PC-3 (cell line): ENCODE measurements at regions of chr5 and their contacts with region 1.

Region 1: DNA sequence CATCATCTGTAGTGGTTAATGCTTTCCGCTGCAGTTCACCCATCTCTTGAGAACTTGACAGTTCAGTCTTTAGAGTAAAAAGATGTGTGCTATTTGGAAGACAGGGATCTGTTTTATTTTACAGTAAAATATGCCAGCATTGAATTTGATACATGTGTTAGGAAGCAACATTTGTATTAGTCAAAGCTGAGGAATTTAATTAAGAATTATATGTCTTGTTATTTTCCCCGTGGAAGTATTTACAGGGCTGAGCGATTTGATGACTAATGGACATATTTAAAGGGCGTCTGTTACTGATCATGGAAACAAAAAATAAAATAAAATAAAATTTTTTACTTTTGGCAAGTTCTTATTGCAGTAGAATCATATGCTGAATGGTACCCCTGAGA is 101.3 kb downstream of the PAM start:
- DNase-seq: peak; percentile 88
- ATAC-seq: peak; percentile 63
- H3K4me3 ChIP-seq: peak overlapping the region; percentile 9; the same call in 1 of the 2 replicates
- H3K27ac ChIP-seq: peak overlapping the region; percentile 77
- H3K4me1 ChIP-seq: peaks cover 67% of the 10 kb centered on the region
- H3K27me3 ChIP-seq: no peaks in the 10 kb centered on the region
- CTCF ChIP-seq: no peak

Region 2: GRCh38 chr5:102700120-102700831 is 156.1 kb before region 1 on chr5:
- CTCF ChIA-PET with region 1: no interaction called
- POLR2A ChIA-PET with region 1: no interaction called
- intact Hi-C with region 1: no loop called
- DNase-seq: no peak
- ATAC-seq: no peak; the same call in 1 of the 2 replicates
- H3K4me3 ChIP-seq: no peak overlapping the region
- H3K27ac ChIP-seq: no peak overlapping the region
- H3K4me1 ChIP-seq: no peaks in the 10 kb centered on the region
- H3K27me3 ChIP-seq: no peaks in the 10 kb centered on the region
- CTCF ChIP-seq: no peak

Region 3: GRCh38 chr5:102778478-102778877 is 77.9 kb before region 1 on chr5:
- CTCF ChIA-PET with region 1: no interaction called
- POLR2A ChIA-PET with region 1: no interaction called
- intact Hi-C with region 1: loop called (anchors 2 kb)
- DNase-seq: peak; percentile 64
- ATAC-seq: peak; percentile 53
- H3K4me3 ChIP-seq: no peak overlapping the region
- H3K27ac ChIP-seq: peak overlapping the region; percentile 3; the same call in 1 of the 2 replicates
- H3K4me1 ChIP-seq: peaks cover 27% of the 10 kb centered on the region
- H3K27me3 ChIP-seq: no peaks in the 10 kb centered on the region
- CTCF ChIP-seq: no peak

Region 4: GRCh38 chr5:102811972-102812371 is 44.4 kb before region 1 on chr5:
- CTCF ChIA-PET with region 1: no interaction called
- POLR2A ChIA-PET with region 1: no interaction called
- intact Hi-C with region 1: loop called (anchors 1 kb)
- DNase-seq: peak; percentile 96
- ATAC-seq: peak; percentile 94
- H3K4me3 ChIP-seq: no peak overlapping the region
- H3K27ac ChIP-seq: peak overlapping the region; percentile 8; the same call in 1 of the 2 replicates
- H3K4me1 ChIP-seq: peaks cover 13% of the 10 kb centered on the region
- H3K27me3 ChIP-seq: no peaks in the 10 kb centered on the region
- CTCF ChIP-seq: no peak

Region 5: DNA sequence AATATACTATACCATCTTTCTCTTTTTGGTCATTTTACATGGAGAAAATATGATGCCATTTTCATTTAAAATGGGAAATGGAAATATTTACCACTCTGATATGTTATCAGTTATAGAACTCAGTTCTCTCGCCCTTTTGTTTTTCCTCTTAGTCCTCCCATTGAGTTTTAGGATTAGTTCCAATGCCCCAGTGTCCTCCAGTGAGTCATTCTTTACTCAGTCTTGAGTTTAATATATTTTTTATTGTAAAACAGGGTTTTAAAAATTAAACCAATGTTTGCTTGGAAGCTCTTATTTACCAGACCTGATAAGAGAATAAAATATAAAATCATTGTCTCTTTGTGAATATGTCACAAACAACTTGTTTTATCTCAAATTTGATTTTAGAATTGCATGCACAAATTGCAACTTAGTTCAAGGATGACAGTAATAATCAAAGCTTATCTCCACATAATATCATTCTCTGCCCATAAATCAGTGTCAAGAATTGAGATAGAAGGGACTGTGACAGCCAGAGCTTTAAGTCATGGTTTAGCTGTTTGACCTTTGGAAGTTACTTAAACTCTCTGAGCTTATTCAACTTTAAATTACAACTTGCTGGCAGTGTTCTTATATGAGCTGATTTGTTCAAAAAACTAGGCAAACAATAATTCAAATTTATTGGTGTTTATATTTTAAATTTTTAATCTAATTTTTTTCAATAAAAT is 65.1 kb after region 1 on chr5:
- CTCF ChIA-PET with region 1: no interaction called
- POLR2A ChIA-PET with region 1: no interaction called
- intact Hi-C with region 1: loop called (anchors 2 kb)
- DNase-seq: peak; percentile 70
- ATAC-seq: peak; percentile 79
- H3K4me3 ChIP-seq: no peak overlapping the region
- H3K27ac ChIP-seq: peak overlapping the region; percentile 83
- H3K4me1 ChIP-seq: peaks cover 36% of the 10 kb centered on the region
- H3K27me3 ChIP-seq: no peaks in the 10 kb centered on the region
- CTCF ChIP-seq: no peak

Region 6: GRCh38 chr5:103132684-103133083 is 276.3 kb after region 1 on chr5:
- CTCF ChIA-PET with region 1: no interaction called
- POLR2A ChIA-PET with region 1: no interaction called
- intact Hi-C with region 1: no loop called
- DNase-seq: no peak
- ATAC-seq: no peak
- H3K4me3 ChIP-seq: no peak overlapping the region
- H3K27ac ChIP-seq: no peak overlapping the region
- H3K4me1 ChIP-seq: no peaks in the 10 kb centered on the region
- H3K27me3 ChIP-seq: no peaks in the 10 kb centered on the region
- CTCF ChIP-seq: no peak

Region 7: DNA sequence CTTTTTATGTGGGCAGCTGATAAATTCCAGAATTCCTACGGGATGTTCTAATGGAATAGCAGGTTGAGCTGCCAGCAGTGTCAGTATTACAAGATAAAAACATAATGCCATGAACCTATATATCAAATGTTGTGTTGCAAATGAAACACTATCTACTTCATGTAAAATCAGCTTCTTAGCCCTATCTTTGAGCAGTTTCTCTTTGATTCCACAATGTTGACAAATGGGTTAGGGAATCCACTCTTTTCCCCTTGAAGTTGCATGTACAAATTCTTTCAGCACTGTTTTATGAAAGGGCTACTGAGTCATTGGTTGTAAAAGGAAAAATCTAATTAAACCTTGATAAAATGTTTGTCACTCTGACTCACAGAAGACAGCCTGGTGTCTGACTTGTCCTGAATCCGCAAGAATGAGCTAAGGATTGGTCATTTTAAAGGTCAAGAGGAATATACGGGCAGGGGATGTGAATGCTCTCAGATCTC is 1656.8 kb after region 1 on chr5:
- CTCF ChIA-PET with region 1: no interaction called
- POLR2A ChIA-PET with region 1: no interaction called
- intact Hi-C with region 1: loop called (anchors 5 kb)
- DNase-seq: peak; percentile 97
- ATAC-seq: peak; percentile 94
- H3K4me3 ChIP-seq: peak overlapping the region; percentile 15; the same call in 1 of the 2 replicates
- H3K27ac ChIP-seq: peak overlapping the region; percentile 67
- H3K4me1 ChIP-seq: peaks cover 29% of the 10 kb centered on the region
- H3K27me3 ChIP-seq: no peaks in the 10 kb centered on the region
- CTCF ChIP-seq: no peak